OCI-LY7 (cell line): ENCODE measurements at regions of chr2 and their contacts with region 1.

Region 1: DNA sequence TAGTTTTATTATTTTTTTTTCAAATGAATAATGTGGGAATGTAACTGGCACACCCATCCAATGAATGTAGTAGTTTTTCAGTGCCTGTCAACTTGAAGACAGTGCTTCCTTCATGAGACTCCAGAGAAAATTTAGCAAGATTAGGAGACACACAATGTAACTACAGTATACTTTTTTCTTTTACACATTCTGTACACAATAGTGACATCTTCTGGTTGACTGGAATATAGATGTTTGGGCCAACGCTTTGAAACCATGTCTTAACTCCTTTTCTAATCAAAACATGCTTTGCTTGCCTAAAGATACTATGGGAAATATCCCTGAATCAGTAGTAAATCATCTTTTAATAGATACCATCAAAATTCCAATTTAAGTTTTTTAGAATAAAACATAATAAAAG is 229.5 kb upstream of the ZC3H15 start:
- DNase-seq: peak; percentile 19
- H3K4me3 ChIP-seq: no peak overlapping the region
- H3K27ac ChIP-seq: no peak overlapping the region
- H3K4me1 ChIP-seq: no peaks in the 10 kb centered on the region
- CTCF ChIP-seq: peak; percentile 81

Region 2: GRCh38 chr2:185291035-185291647 is 965.4 kb before region 1 on chr2:
- CTCF ChIA-PET with region 1: no interaction called
- POLR2A ChIA-PET with region 1: no interaction called
- intact Hi-C with region 1: loop called (anchors 10 kb)
- DNase-seq: peak; percentile 39
- H3K4me3 ChIP-seq: no peak overlapping the region
- H3K27ac ChIP-seq: no peak overlapping the region
- H3K4me1 ChIP-seq: no peaks in the 10 kb centered on the region
- CTCF ChIP-seq: peak; percentile 73

Region 3: DNA sequence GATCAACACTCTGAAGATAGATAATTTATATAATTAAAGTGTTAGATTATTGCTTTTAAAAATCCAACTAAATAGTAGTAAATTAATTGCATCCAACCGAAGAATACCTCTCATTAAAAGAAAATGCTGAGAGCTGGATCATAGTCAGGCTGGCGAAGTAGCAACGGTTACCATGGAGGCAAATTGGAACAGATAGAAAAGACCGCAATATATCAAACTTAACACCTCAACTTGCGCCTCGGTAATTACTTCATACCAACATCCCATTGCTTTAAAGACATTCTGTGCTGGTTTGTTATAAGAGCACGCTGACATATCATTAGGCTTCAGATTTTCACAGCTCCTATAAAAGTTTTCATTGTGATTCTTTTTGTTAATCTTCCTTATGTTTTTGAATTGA is 45.7 kb after region 1 on chr2:
- CTCF ChIA-PET with region 1: no interaction called
- POLR2A ChIA-PET with region 1: no interaction called
- intact Hi-C with region 1: no loop called
- DNase-seq: no peak
- H3K4me3 ChIP-seq: no peak overlapping the region
- H3K27ac ChIP-seq: no peak overlapping the region
- H3K4me1 ChIP-seq: no peaks in the 10 kb centered on the region
- CTCF ChIP-seq: no peak